Astrocyte of the cerebellum (primary cell): ENCODE measurements at regions of chr13 and their contacts with region 1.

Region 1: GRCh38 chr13:46553886-46554858 is 1.2 kb downstream of the LRCH1 start:
- DNase-seq: peak; percentile 57
- H3K4me3 ChIP-seq: peak overlapping the region; percentile 78
- CTCF ChIP-seq: peak; percentile 34

Region 2: DNA sequence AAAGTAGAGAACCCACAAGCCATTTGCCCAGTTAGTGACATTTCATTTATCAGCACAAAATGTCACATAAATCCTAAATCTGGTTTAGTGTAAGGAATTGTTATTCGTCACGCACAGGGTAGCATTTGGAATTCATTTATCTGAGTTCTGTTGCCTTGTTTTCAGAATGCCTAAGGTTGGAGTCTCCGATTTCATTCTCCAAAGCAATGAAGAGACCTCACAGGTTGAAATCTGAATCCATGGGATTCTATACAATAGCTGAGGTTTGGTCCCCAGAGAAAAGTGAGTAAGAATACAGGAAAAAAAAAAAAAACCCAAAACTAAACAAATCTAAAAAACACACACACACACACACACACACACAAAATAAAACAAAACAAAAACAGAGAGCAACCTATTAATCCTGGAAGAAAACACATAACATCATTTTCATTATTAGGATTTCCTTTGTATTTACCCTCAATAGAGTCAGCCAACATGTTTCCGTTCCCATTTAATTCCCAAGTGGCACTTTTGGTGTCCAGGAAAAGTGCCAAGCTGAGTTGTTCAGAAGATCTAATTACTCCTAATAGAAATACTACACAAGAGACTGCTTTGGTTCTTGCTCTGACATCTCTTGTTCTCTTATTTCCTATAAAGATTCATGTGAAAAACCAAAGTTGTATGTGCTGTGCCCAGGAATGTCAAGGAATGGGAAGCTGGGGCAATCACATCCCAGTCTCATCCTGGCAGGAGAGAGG is 37.4 kb before region 1 on chr13:
- in situ Hi-C with region 1: no loop called
- DNase-seq: no peak
- H3K4me3 ChIP-seq: no peak overlapping the region
- CTCF ChIP-seq: no peak

Region 3: GRCh38 chr13:46603165-46603603 is 49.0 kb after region 1 on chr13:
- in situ Hi-C with region 1: loop called (anchors 10 kb)
- DNase-seq: no peak
- H3K4me3 ChIP-seq: no peak overlapping the region
- CTCF ChIP-seq: no peak